PC-9 (cell line): ENCODE measurements at regions of chr3 and their contacts with region 1.

Region 1: GRCh38 chr3:138941259-138941885 is 5.6 kb downstream of the FOXL2 start:
- DNase-seq: peak; percentile 40 to 55
- H3K4me3 ChIP-seq: no peak overlapping the region
- H3K27ac ChIP-seq: no peak overlapping the region
- H3K4me1 ChIP-seq: no peaks in the 10 kb centered on the region
- H3K27me3 ChIP-seq: no peaks in the 10 kb centered on the region
- CTCF ChIP-seq: peak; percentile 68

Region 2: DNA sequence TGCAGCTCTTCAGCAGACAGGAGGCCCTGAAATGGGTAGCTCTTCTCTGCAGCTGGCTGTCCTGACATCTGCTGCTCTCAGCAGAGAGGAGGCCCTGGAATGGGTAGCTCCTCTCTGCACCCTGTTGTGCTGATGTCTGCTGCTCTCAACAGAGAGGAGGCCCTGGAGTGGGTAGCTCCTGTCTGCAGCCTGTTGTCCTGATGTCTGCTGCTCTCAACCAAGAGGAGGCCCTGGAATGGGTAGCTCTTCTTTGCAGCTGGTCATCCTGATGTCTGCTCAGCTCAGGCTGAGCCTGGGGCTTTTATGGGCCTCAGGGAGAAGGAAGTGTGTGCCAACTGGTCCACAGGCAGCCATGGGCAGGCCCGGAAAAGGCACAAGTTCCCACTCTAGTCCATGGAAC is 173.2 kb before region 1 on chr3:
- CTCF ChIA-PET with region 1: no interaction called
- POLR2A ChIA-PET with region 1: no interaction called
- intact Hi-C with region 1: no loop called
- DNase-seq: no peak
- H3K4me3 ChIP-seq: no peak overlapping the region
- H3K27ac ChIP-seq: no peak overlapping the region
- H3K4me1 ChIP-seq: no peaks in the 10 kb centered on the region
- H3K27me3 ChIP-seq: no peaks in the 10 kb centered on the region
- CTCF ChIP-seq: no peak

Region 3: GRCh38 chr3:138916825-138917224 is 24.5 kb before region 1 on chr3:
- CTCF ChIA-PET with region 1: no interaction called
- POLR2A ChIA-PET with region 1: no interaction called
- intact Hi-C with region 1: no loop called
- DNase-seq: peak; percentile 54 to 59
- H3K4me3 ChIP-seq: no peak overlapping the region
- H3K27ac ChIP-seq: peak overlapping the region; percentile 45
- H3K4me1 ChIP-seq: peaks cover 52% of the 10 kb centered on the region
- H3K27me3 ChIP-seq: no peaks in the 10 kb centered on the region
- CTCF ChIP-seq: no peak

Region 4: GRCh38 chr3:139111392-139112229 is 170.2 kb after region 1 on chr3:
- CTCF ChIA-PET with region 1: no interaction called
- POLR2A ChIA-PET with region 1: no interaction called
- intact Hi-C with region 1: loop called (anchors 5 kb)
- DNase-seq: peak in 1 of 2 experiments; percentile 67
- H3K4me3 ChIP-seq: no peak overlapping the region
- H3K27ac ChIP-seq: no peak overlapping the region
- H3K4me1 ChIP-seq: no peaks in the 10 kb centered on the region
- H3K27me3 ChIP-seq: 0 out of 2 replicates have a peak, but pooled peaks cover 6% of the 10 kb centered on the region
- CTCF ChIP-seq: peak; percentile 77